ENCODE measurements at regions of chr10 and their contacts with region 1.

Region 1: GRCh38 chr10:22003079-22003913 is at the start of gene DNAJC1:
- DNase-seq: peak; percentile 96 to 99 (median 98)
- ATAC-seq: peak; percentile 90
- H3K4me3 ChIP-seq: peak within 1 kb of the TSS; percentile 71 to 95
- H3K4me3 Mint-ChIP-seq: peak within 1 kb of the TSS; percentile 95
- H3K27ac ChIP-seq: peak within 1 kb of the TSS; percentile 80 to 85
- H3K27ac Mint-ChIP-seq: peak within 1 kb of the TSS; percentile 94
- H3K4me1 ChIP-seq: peaks cover 16% of the 10 kb centered on the region
- H3K4me1 Mint-ChIP-seq: peaks cover 48% of the 10 kb centered on the region
- H3K27me3 ChIP-seq: no peaks in the 10 kb centered on the region
- H3K27me3 Mint-ChIP-seq: peaks cover 2% of the 10 kb centered on the region
- CTCF ChIP-seq: no peak
- total RNA-seq, gene DNAJC1: 15.3 to 18.1 TPM

Region 2: GRCh38 chr10:21989453-21990154 is 13.7 kb before region 1 on chr10:
- CTCF ChIA-PET with region 1: interaction called, 24 read pairs
- POLR2A ChIA-PET with region 1: interaction called, 19 read pairs
- intact Hi-C with region 1: no loop called
- DNase-seq: peak in 6 of 9 experiments; percentile 3 to 64 (median 22)
- ATAC-seq: peak; percentile 89
- H3K4me3 ChIP-seq: no peak overlapping the region
- H3K4me3 Mint-ChIP-seq: no peak overlapping the region
- H3K27ac ChIP-seq: no peak overlapping the region
- H3K27ac Mint-ChIP-seq: no peak overlapping the region
- H3K4me1 ChIP-seq: no peaks in the 10 kb centered on the region
- H3K4me1 Mint-ChIP-seq: peaks cover 10% of the 10 kb centered on the region
- H3K27me3 ChIP-seq: no peaks in the 10 kb centered on the region
- H3K27me3 Mint-ChIP-seq: no peaks in the 10 kb centered on the region
- CTCF ChIP-seq: peak; percentile 53

Region 3: DNA sequence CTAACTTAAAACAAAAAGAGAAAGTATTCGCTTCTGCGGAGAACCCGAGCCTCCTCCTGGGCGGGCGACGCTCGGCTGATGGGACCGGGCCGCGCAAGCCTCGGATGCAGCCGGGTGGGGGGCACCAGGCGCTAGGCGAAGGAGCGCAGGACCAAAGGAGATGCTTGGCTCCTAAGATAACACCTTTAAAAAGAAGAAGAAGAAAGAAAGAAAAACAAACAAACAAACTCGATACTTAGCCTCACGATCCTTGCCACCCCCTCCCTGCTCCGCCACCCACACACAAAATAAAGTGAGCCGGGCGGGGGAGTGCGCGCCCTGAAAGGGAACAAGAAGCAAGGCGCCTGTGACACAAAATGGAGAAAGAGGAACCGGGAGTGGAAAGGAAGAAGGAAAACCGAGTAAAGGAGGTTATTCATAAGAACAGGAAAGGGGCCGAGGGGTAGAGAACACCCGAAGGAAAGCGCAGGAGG is 248.5 kb after region 1 on chr10:
- CTCF ChIA-PET with region 1: no interaction called
- POLR2A ChIA-PET with region 1: interaction called, 4 read pairs
- intact Hi-C with region 1: loop called (anchors 2 kb)
- DNase-seq: peak; percentile 25 to 82 (median 63)
- ATAC-seq: peak; percentile 59
- H3K4me3 ChIP-seq: peak overlapping the region; percentile 59 to 67
- H3K4me3 Mint-ChIP-seq: peak overlapping the region; percentile 94
- H3K27ac ChIP-seq: peak overlapping the region; percentile 77 to 85
- H3K27ac Mint-ChIP-seq: peak overlapping the region; percentile 98
- H3K4me1 ChIP-seq: peaks cover 6% of the 10 kb centered on the region
- H3K4me1 Mint-ChIP-seq: peaks cover 24% of the 10 kb centered on the region
- H3K27me3 ChIP-seq: peaks cover 9 to 10% of the 10 kb centered on the region in 2 experiments
- H3K27me3 Mint-ChIP-seq: peaks cover 30% of the 10 kb centered on the region
- CTCF ChIP-seq: no peak

Region 4: DNA sequence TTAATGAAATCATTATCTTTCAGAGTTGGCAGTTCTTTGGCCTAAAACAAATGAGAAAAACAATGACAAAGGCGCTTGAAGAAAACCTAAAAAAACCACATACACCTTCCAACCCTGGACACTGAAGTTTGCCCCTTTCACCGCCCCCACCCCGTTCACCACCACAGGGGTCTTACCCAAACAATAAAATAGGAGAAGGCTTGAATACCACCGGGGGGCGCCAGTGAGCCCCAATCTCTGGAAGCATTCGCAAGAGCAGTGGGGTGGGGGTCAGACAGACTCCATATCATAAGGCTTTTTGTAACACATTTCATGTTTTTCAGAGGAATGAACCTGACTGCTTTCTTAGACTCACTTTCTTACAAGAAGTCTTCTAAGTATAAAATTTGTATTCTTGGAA is 547.4 kb after region 1 on chr10:
- CTCF ChIA-PET with region 1: interaction called, 4 read pairs
- POLR2A ChIA-PET with region 1: no interaction called
- intact Hi-C with region 1: loop called in 1 of 2 experiments (anchors 5 kb)
- DNase-seq: peak; percentile 37 to 83 (median 75)
- ATAC-seq: peak; percentile 79
- H3K4me3 ChIP-seq: no peak overlapping the region
- H3K4me3 Mint-ChIP-seq: no peak overlapping the region
- H3K27ac ChIP-seq: no peak overlapping the region
- H3K27ac Mint-ChIP-seq: peak overlapping the region; percentile 67
- H3K4me1 ChIP-seq: no peaks in the 10 kb centered on the region
- H3K4me1 Mint-ChIP-seq: peaks cover 30% of the 10 kb centered on the region
- H3K27me3 ChIP-seq: no peaks in the 10 kb centered on the region
- H3K27me3 Mint-ChIP-seq: no peaks in the 10 kb centered on the region
- CTCF ChIP-seq: peak; percentile 81

Region 5: GRCh38 chr10:22988581-22989360 is 985.5 kb after region 1 on chr10:
- CTCF ChIA-PET with region 1: interaction called, 26 read pairs
- POLR2A ChIA-PET with region 1: no interaction called
- intact Hi-C with region 1: no loop called
- DNase-seq: peak; percentile 46 to 85 (median 74)
- ATAC-seq: peak; percentile 80
- H3K4me3 ChIP-seq: no peak overlapping the region
- H3K4me3 Mint-ChIP-seq: no peak overlapping the region
- H3K27ac ChIP-seq: no peak overlapping the region
- H3K27ac Mint-ChIP-seq: no peak overlapping the region
- H3K4me1 ChIP-seq: peaks cover 4% of the 10 kb centered on the region
- H3K4me1 Mint-ChIP-seq: peaks cover 14% of the 10 kb centered on the region
- H3K27me3 ChIP-seq: no peaks in the 10 kb centered on the region
- H3K27me3 Mint-ChIP-seq: peaks cover 2% of the 10 kb centered on the region
- CTCF ChIP-seq: peak; percentile 88

Measured in CD8-positive, alpha-beta T cell (primary cell).